ENCODE measurements at regions of chr7 and their contacts with region 1.

Region 1: DNA sequence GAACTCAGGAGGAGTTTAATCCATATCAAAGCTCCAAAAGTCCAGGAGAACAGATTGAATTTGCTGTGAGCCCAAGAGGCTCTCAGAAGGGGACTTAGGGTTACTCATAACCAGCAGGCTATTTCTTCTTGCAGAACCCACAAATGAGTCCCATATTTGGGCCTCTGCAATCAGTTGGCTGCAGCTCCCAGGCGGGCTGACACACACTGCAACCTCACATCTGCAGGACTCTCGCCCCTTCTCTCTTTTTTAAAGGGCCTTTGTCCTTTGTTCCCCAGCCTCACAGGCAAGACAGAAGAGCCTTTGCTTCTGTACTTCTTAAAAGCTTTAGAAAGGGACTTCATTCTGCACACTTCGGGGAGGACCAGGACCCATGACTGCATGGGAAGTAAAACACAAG is 26.7 kb downstream of the CREB3L2 start:
- DNase-seq: no peak
- H3K4me3 ChIP-seq: no peak overlapping the region; the same call in 1 of the 2 replicates
- CTCF ChIP-seq: no peak

Region 2: GRCh38 chr7:137992550-137993394 is 17.6 kb after region 1 on chr7:
- CTCF ChIA-PET with region 1: interaction called, 9 read pairs
- POLR2A ChIA-PET with region 1: interaction called, 10 read pairs
- DNase-seq: no peak
- H3K4me3 ChIP-seq: peak overlapping the region; percentile 2; the same call in 1 of the 2 replicates
- CTCF ChIP-seq: no peak